PC-9 (cell line): ENCODE measurements at regions of chrX and their contacts with region 1.

Region 1: DNA sequence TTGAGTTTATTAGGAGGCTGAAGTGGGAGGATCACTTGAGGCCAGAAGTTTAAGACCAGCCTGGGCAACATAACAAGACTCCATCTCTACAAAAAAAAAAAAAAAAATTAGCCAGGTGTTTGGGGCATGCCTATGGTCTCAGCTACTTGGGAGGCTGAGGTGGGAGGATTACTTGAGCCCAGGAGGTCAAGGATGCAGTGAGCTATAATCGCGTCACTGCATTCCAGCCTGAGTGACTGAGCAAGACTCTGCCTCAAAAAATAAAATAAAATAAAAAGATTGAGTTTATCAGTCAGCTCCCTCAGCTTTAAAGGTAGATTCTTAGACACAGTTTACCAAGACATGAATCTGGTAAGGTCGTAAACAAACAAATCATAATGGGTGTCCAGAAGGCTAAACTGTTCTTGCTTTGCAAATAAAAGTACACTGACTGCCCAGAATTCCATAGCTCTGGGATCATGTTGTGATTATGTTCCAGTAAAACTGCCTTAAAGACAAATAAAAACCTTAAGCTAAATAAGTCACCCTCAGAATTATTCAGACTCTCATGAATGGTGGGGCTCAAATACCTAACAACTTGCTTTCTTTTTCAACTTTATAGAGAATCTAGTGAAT is 18.7 kb downstream of the APOO start:
- DNase-seq: no peak
- H3K4me3 ChIP-seq: no peak overlapping the region
- H3K27ac ChIP-seq: 0 out of 2 replicates have a peak overlapping the region, but pooled peaks have one; percentile 27
- H3K4me1 ChIP-seq: peaks cover 8% of the 10 kb centered on the region
- H3K27me3 ChIP-seq: no peaks in the 10 kb centered on the region
- CTCF ChIP-seq: no peak

Region 2: DNA sequence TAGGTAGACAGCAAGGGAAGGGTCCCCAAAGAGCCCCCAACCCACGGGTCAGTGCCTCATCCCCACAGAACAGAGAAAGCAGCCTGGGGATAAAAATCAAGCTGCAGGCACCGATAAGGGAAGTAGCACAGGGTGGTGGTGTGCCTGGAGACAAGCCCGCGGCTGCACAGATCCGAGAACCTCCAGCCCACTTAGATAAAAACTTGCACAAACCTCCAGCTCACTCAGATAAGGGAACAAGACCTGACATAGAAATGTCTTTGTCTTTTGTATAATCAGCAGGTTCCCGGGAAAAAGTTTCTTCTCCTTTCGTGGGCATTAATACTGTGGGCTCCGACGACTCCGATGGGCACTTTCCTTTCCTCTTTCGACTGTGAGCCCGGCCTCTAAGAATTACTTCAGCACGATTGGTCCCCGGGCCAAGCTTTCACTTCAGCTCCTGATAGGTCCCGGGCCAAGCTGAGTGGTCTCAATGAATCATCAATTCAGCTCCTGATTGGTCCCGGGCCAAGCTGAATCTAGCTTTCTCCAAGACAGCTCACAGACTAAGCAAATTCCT is 189.3 kb before region 1 on chrX:
- CTCF ChIA-PET with region 1: no interaction called
- POLR2A ChIA-PET with region 1: no interaction called
- intact Hi-C with region 1: no loop called
- DNase-seq: no peak
- H3K4me3 ChIP-seq: no peak overlapping the region
- H3K27ac ChIP-seq: no peak overlapping the region
- H3K4me1 ChIP-seq: no peaks in the 10 kb centered on the region
- H3K27me3 ChIP-seq: no peaks in the 10 kb centered on the region
- CTCF ChIP-seq: no peak

Region 3: DNA sequence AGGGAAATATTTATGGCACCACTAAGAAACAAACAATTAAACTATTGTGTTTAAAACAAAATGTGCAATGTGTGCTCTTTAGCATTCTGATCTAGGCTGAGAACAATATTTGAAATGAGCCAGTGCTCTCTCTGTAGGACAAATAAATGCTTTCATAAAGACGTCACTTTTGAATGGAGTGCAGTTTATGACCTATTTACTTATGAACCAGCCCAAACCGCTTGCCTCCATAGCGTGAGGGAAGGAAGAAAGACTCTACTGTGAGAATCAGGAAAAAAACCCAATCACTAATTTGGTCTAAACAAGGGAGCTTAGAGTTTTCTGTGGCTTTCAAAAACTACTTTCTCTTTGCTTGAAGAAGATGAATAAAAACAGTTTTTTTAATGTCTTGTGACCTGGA is 66.6 kb before region 1 on chrX:
- CTCF ChIA-PET with region 1: interaction called, 11 read pairs
- POLR2A ChIA-PET with region 1: no interaction called
- intact Hi-C with region 1: no loop called
- DNase-seq: peak in 1 of 2 experiments; percentile 50
- H3K4me3 ChIP-seq: no peak overlapping the region
- H3K27ac ChIP-seq: no peak overlapping the region
- H3K4me1 ChIP-seq: no peaks in the 10 kb centered on the region
- H3K27me3 ChIP-seq: no peaks in the 10 kb centered on the region
- CTCF ChIP-seq: no peak